GM10248 (cell line): ENCODE measurements at regions of chr9 and their contacts with region 1.

Region 1: DNA sequence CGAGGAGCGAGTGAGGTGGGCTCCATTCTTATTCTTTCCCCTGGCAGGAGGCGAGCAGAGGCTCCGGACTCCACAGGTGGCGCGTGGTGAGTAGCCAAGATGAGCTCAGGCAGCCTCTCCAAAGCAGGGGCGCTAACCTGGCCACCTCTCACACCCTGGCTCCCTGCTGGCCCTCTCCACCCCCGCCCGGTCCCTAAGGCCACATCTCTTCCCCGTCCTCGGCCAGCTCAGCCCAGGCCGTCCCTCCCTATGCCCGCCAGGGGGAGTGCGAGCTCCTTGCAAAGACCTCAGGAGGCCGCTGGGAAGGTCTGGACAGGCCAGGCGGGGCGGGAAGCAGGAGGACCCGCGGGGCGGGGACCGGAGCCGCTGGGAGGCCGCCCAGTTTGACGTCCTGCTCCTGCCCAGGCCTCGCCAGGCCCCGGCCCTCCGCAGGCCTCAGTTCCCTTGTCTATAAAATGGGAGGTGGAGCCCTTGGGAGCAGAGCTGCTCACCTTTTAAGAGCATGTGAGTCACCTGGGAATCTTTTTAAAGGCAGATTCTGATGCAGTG is 46.3 kb upstream of the GGTA1 start:
- DNase-seq: peak; percentile 91
- CTCF ChIP-seq: peak; percentile 98

Region 2: GRCh38 chr9:121529237-121529987 is 16.5 kb before region 1 on chr9:
- CTCF ChIA-PET with region 1: interaction called, 11 read pairs
- POLR2A ChIA-PET with region 1: no interaction called
- DNase-seq: no peak
- CTCF ChIP-seq: no peak

Region 3: DNA sequence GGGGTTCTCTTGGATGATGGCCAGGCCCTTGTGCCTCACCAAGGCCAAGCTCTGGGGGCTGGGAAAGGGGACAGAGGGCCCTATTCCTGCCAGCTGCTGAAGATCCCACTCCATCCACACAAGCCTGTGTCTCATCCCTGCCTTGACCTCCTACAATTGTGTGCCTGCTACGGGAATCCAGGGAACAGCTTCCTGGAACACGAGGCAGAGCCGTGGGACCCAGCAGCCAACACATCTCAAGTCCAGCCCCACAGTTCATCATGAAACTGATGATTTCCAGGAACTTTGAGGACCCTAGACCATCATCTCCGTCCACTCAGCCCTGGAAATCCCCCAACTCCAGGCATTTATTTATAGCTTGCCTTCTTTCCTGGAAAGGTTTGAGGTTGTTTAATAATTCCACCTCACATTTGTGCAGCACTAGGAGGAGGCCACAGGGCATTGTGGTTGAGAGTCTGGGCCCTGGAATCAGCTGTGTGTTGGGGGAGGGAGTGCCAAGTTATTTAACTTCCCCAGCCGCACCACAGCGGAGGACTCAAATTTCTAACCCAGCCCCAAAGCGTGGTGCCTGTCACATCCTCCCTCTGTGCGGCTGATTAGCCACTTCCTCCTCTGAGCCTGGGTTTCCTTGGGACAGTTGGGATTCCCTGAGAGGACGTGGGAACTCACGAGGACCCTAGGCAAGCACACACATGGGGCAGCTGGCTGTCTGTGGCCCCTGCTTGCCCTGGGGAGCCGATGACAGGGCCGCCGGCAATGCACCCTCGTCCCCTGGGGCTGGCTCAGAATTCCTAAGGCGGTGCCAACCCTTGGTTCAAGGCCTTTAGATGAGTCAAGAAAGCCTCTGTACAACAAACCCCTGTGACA is 11.9 kb after region 1 on chr9:
- CTCF ChIA-PET with region 1: interaction called, 33 read pairs
- POLR2A ChIA-PET with region 1: no interaction called
- DNase-seq: peak; percentile 55
- CTCF ChIP-seq: no peak

Region 4: DNA sequence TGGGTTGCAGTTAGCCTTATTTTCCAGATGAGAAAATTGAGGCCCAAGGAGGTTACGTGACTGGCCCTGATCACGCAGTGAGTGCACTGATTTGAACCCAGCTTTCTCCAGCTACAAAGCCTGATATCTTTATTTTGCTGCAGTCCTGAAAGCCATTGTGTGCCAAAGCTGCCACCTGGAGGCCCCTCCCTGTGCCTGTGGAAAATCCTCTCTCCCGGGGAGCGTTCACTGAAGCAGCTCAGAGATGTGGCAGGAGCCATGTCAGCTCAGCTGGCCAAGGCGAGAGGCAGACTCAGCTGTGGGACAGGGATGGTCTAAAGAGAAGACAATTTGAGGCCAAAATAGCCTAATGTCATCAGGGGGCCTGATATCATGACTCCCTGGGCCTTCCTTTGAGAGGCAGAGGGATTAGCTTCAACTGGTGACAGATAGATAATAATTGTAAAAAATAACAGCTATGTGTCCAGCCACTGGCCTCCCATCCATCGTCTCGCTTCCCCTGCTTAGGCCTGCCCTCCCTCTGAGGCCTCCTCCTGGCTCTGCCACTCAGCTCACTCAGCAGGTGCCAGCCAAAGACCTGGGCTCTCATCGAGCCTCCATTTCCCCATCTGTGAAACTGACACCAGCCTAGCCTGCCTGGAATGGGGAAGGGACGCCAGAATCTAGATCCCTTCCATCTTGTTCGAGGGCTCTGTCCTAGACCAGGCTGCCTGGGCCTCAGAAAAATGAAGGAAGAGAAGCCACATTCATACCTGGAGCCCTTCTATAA is 28.0 kb after region 1 on chr9:
- CTCF ChIA-PET with region 1: interaction called, 13 read pairs
- POLR2A ChIA-PET with region 1: no interaction called
- DNase-seq: no peak
- CTCF ChIP-seq: no peak

Region 5: DNA sequence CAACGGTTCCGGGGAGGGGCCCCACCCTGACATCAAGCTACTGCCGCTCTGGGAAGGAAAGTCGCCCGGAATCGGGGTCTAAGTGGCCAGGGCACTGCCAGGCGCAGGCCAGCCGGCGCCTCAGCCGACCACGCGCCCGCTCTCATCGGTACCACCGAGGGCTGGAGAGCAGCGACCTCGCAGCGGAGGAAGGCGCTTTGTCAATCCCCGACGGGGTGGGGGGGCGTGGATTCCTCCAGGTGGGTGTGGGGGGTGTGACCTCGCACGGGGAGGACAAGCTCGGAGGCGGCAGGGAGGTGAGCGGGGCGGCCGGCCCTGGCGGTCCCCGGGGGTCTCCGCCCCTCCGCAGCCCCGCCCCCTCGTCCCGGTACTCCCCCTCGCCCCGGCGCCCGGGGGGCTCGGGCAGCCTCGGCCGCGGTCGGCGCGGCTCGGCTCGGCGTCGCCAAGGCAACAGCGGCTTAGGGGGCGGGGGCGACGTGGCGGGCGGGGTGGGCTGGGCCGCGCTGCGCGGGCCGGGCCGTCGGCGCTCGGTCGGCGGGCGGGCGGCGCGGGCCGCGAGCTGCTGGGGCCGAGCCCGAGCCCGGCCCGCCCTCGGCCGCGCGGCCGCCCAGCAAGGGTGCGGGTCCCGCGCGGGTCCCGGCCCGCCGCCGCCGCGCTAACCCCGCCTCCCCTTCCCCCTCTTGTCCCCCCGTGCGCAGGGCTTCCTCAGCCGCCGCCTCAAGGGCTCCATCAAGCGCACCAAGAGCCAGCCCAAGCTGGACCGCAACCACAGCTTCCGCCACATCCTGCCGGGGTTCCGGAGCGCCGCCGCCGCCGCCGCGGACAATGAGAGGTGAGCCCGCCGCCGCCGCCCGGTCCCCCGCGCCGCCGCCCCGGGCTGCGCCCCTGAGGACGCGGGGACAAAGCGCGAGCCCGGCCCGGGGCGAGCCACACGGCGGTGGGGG is 152.9 kb after region 1 on chr9:
- CTCF ChIA-PET with region 1: interaction called, 25 read pairs
- POLR2A ChIA-PET with region 1: no interaction called
- DNase-seq: peak; percentile 52
- CTCF ChIP-seq: no peak

Region 6: GRCh38 chr9:121990600-121991306 is 444.8 kb after region 1 on chr9:
- CTCF ChIA-PET with region 1: interaction called, 10 read pairs
- POLR2A ChIA-PET with region 1: no interaction called
- DNase-seq: no peak
- CTCF ChIP-seq: no peak